ENCODE measurements at regions of chr20 and their contacts with region 1.

Region 1: DNA sequence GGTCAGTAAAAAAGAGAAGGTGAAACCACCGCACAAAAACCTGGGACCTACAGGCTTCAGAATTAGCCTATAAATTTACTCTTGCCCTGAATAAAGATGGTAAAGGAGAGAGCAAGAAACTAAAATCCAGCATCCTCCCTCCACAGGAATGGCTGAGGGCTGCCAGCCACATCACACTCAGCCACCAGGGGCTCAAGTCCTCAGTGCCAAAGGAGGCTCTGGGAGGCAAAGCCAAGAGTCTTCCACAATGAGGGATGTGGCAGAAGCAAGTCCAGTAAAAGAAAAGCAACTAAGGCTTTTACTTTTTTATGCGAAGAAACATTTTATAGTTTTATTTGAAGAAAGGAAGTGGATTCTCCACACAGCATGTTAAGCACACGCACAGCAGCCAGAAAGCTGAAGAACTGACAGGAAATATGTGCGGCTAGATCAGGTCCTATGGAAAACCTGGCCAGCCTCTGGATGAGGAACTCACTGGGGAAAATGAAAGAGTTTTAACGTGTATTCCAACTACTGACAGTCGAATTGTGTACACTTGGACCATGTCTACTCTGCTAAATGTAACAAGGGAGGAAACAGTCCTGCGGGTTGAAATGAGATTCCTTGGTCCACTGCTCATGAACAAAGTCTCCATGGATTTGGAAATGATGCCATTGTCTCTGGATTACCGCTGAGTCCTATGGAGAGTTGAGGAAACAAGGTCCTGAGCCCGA is 219.4 kb upstream of the SSTR4 start:
- DNase-seq: no peak
- H3K4me3 ChIP-seq: peak overlapping the region in 1 of 59 donors; percentile 0
- H3K27ac ChIP-seq: no peak overlapping the region
- H3K27me3 ChIP-seq: peaks cover 0 to 6% (median 0%) of the 10 kb centered on the region in 45 donors
- CTCF ChIP-seq: no peak

Region 2: DNA sequence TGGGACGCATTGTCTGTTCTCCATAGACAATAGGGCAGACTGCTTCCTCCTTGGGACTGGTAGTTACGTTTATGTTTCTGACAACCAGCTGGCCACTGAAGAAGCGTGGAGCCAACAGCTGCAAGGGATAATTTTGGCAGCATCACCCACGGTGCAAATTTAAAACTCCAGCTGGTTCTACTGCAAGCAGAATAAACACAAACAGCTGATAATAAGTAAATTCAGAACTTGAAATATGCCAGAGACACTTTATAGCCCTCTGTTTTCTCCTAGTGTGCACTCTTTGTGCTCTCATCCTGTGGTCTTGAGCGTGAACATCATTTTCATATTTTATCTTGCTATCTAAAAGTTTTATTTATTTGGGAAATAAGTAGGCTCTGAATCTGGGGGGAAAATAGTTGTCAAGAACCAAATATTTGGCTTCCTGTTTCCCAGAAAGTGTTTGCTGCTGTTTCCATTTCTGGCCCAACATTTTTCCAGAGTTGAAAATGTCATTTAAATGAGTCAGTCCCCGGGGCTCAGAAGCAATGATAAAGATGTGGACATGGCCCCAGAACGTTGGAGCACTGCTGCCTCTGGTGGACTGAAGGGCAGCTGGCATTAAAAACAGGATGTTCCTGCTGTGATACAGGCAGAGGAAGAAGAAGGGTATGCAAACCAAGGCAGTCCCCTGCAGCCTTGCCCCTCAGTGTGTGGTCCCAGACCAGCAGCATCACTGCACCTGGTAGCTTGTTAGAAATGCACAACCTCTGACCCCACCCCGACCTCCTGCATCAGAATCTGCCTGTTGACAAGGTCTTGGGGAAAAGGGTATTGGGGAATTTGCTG is 246.2 kb after region 1 on chr20:
- intact Hi-C with region 1: no loop called
- DNase-seq: peak in 1 of 10 donors; percentile 55
- H3K4me3 ChIP-seq: no peak overlapping the region
- H3K27ac ChIP-seq: peak overlapping the region in 27 of 59 donors; percentile 3 to 75 (median 35)
- H3K27me3 ChIP-seq: no peaks in the 10 kb centered on the region
- CTCF ChIP-seq: peak in 37 of 56 donors; percentile 10 to 54 (median 31)

Region 3: DNA sequence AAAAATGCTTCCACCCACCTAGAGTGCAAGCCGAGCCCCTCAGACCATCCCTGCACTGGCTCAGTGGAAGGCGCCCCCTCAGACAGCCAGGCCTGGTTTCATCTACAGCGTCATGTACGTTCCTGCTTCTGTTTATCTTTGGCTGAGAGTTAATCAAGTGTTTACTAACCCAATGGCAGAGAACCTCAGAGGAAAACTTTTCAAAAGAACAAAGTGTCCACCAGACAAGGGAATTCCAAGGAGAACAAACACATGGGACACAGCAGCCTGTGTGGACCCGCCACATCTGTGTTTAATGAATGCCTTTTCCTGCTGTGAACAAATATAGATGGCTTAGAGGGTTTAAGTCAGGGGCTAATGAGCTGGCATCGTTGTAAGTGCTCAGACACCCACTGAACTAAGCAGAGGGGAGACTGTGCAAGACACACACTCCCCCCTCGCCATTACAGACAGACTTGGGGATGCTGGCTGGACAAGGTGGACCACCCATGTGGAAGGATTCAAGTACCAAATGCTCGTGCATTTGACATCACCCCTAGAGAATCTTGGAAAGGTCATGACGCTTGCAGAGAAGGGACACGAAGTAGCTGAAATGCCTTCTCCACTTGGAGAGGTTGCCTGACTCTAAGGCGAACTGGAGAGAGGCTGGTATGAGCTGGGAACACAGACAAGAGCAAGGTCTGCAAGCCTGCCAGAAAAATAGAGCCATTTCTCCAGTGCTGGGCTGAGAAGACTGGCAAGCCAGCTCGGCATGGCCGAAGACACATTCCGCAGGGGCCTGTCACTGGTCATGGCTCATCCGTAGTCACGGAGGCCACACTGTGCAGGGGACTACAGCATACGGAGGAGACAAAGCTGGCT is 481.3 kb after region 1 on chr20:
- intact Hi-C with region 1: loop called in 1 of 2 experiments (anchors 10 kb)
- DNase-seq: no peak
- H3K4me3 ChIP-seq: no peak overlapping the region
- H3K27ac ChIP-seq: no peak overlapping the region
- H3K27me3 ChIP-seq: peaks cover 0 to 9% (median 0%) of the 10 kb centered on the region in 45 donors
- CTCF ChIP-seq: no peak

Region 4: DNA sequence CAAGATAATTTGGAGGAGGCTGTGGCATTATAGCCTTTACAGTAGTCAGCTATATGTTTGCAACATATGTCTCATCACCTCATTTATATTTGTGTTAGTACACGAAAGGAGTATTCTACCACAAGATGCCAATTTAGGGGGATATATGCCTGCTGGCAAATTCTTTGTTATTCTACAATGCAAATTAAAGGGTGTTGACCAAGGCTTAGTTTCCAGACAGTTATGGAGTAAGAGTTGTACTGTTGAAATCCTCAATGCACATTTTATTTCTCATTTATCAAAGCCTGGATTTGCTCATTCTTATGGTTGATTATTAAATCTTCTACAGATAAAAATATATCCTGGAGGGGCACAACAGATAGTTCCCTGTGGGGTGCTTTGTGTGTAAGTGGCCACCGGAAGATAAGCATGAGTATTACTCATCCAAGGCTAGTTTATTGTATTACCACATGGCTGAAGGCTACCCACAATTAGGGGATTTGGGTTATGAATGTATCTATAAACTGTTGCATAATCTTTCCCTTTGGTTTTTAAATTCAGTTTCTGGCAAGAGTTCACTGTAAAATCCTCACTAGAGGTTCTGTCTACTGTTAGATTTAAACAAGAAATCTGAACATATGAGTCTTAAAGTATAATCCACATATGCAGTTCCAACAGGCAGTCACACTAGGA is 781.0 kb after region 1 on chr20:
- intact Hi-C with region 1: no loop called
- DNase-seq: no peak
- H3K4me3 ChIP-seq: no peak overlapping the region
- H3K27ac ChIP-seq: no peak overlapping the region
- H3K27me3 ChIP-seq: peaks cover 0 to 12% (median 0%) of the 10 kb centered on the region in 45 donors
- CTCF ChIP-seq: no peak

Measured in dorsolateral prefrontal cortex (tissue), 120 donors.